GM12878 (cell line): ENCODE measurements at regions of chr3 and their contacts with region 1.

Region 1: GRCh38 chr3:182937293-182938051 is 42.9 kb downstream of the DCUN1D1 start:
- DNase-seq: no peak
- ATAC-seq: peak; percentile 94
- H3K4me3 ChIP-seq: no peak overlapping the region
- H3K27ac ChIP-seq: no peak overlapping the region
- H3K4me1 ChIP-seq: peaks cover 6% of the 10 kb centered on the region
- H3K27me3 ChIP-seq: no peaks in the 10 kb centered on the region
- CTCF ChIP-seq: no peak
- EP300 ChIP-seq: no peak
- POLR2A ChIP-seq: no peak
- RAD21 ChIP-seq: no peak

Region 2: GRCh38 chr3:182947888-182948287 is 10.4 kb after region 1 on chr3:
- CTCF ChIA-PET with region 1: interaction called, 10 read pairs
- POLR2A ChIA-PET with region 1: no interaction called
- RAD21 ChIA-PET with region 1: no interaction called
- SMC1A ChIA-PET with region 1: interaction called, 10 read pairs
- in situ Hi-C with region 1: no loop called
- intact Hi-C with region 1: no loop called
- DNase-seq: no peak
- ATAC-seq: peak; percentile 86
- H3K4me3 ChIP-seq: no peak overlapping the region
- H3K27ac ChIP-seq: no peak overlapping the region
- H3K4me1 ChIP-seq: no peaks in the 10 kb centered on the region
- H3K27me3 ChIP-seq: no peaks in the 10 kb centered on the region
- CTCF ChIP-seq: peak in 2 of 3 experiments; percentile 25 to 26; a peak in 2 of 6 replicates
- EP300 ChIP-seq: no peak
- POLR2A ChIP-seq: no peak
- RAD21 ChIP-seq: peak; percentile 30

Region 3: DNA sequence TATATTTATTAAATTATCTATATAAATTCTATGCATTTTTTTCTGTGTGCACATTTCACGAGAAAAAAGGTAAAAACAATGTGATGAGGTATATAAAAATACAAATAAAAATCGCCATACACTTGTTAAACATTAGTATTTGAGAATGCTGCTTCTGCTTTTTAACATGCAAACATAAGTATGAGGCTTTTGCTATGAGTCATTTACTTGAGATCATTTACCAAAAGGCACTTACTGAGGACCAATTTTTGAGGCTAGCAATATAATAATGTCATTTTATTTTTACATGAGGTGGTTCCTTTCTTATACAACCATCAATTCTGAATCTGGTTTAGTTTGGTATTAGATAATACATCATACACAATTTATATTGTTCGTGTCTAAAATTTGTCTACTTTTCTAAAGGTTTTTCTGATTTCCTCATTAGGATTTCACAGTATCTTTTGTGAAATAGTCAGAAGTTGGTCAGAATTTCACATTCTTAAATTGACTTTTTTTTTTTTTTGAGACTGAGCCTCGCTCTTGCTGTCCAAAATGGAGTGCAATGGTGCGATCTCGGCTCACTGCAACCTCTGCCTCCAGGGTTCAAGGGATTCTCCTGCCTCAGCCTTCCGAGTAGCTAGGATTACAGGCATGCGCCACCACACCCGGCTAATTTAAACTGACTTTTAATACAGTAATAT is 17.2 kb after region 1 on chr3:
- CTCF ChIA-PET with region 1: no interaction called
- POLR2A ChIA-PET with region 1: no interaction called
- RAD21 ChIA-PET with region 1: no interaction called
- SMC1A ChIA-PET with region 1: interaction called, 10 read pairs
- in situ Hi-C with region 1: no loop called
- intact Hi-C with region 1: no loop called
- DNase-seq: no peak
- ATAC-seq: peak; percentile 92
- H3K4me3 ChIP-seq: no peak overlapping the region
- H3K27ac ChIP-seq: no peak overlapping the region
- H3K4me1 ChIP-seq: no peaks in the 10 kb centered on the region; the same call in 1 of the 2 replicates
- H3K27me3 ChIP-seq: no peaks in the 10 kb centered on the region
- CTCF ChIP-seq: no peak
- EP300 ChIP-seq: peak in 1 of 2 experiments; percentile 36; a peak in 1 of 4 replicates
- POLR2A ChIP-seq: no peak
- RAD21 ChIP-seq: no peak